ENCODE measurements at regions of chr7 and their contacts with region 1.

Region 1: DNA sequence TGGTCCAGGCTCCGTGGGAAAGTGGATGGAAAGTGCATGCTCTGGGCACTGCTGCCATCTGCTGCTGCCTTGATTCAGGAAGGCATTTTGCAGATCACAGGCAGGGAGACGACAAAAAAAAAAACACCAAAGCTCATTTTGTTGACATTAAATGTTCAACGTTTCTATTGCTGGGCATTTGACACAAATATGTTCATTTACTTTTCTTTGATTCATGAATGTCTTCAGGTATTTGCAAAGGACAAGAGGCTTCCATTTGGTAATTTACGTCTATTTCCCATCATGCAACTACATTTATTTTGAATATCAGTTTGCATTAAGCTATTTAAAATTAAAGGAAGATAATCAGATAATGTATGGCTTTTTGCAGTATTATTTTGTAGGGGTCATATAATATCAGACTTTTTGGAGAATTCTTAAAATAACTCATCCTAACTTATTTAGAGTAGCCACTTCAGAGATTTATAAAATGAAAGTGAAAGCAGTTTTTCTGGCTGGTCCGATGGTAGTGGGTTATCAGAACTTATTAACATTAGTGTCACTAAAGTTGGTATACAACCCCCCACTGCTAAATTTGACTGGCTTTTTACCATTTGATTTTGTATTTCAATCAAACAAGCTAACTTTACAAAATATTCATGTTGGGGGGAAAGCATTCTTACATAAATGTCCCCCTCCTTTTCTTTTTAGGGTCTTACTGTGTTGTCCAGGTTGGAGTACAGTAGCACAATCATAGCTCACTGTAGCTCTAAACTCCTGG is 65.3 kb downstream of the PDIA4 start:
- DNase-seq: peak; percentile 51
- H3K4me3 Mint-ChIP-seq: peak overlapping the region; percentile 86
- H3K27ac Mint-ChIP-seq: peak overlapping the region; percentile 77
- H3K4me1 Mint-ChIP-seq: peaks cover 25% of the 10 kb centered on the region
- H3K27me3 Mint-ChIP-seq: no peaks in the 10 kb centered on the region

Region 2: DNA sequence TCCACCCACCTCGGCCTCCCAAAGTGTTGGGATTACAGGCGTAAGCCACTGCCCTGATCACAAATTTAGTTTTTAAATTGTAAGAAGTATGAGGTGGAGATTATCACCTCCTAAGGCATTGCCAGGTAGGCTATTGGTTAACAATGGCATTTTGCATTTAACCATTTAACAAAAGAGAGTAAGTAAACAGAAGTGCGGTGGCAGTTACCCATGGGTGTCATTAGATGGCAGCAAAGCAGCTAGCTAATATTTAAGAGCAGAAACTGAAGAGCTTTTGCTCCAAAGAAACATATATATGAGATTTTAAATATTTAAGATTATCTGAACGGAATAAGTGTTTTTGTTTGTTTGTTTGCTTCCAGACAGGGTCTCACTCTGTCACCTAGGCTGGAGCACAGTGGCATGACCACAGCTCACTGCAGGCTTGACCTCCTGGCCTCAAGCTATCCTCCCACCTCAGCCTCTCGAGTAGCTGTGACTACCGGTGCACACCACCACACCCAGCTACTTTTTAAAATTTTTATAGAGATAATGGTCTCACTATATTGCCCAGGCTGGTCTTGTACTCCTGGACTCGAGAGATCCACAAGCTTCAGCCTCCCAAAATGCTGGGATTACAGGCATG is 698.0 kb before region 1 on chr7:
- intact Hi-C with region 1: loop called (anchors 5 kb)
- DNase-seq: no peak
- H3K4me3 Mint-ChIP-seq: no peak overlapping the region
- H3K27ac Mint-ChIP-seq: no peak overlapping the region
- H3K4me1 Mint-ChIP-seq: peaks cover 7% of the 10 kb centered on the region
- H3K27me3 Mint-ChIP-seq: peaks cover 8% of the 10 kb centered on the region

Region 3: DNA sequence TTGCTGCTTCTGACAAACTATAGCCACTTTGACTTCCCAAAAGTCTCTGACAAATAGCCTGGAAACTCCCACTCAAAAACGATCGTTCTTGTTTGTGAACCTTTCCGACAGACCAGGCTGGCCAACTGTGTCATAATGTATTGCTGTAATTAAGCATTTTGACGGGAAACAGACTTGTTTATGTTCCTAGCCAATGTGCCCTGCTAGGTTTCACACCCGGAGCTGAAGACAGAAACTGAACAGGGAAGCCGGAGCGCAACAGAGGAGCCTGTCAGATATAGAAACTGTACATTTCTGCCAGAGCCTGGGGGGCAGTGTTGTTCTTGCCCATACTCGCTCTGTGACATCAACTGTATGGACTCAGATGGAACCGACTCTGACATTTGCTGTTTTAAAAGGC is 427.8 kb before region 1 on chr7:
- intact Hi-C with region 1: no loop called
- DNase-seq: no peak
- H3K4me3 Mint-ChIP-seq: no peak overlapping the region
- H3K27ac Mint-ChIP-seq: no peak overlapping the region
- H3K4me1 Mint-ChIP-seq: peaks cover 12% of the 10 kb centered on the region
- H3K27me3 Mint-ChIP-seq: peaks cover 22% of the 10 kb centered on the region

Region 4: GRCh38 chr7:148575640-148576411 is 387.2 kb before region 1 on chr7:
- intact Hi-C with region 1: loop called (anchors 2 kb)
- DNase-seq: peak; percentile 57
- H3K4me3 Mint-ChIP-seq: no peak overlapping the region
- H3K27ac Mint-ChIP-seq: no peak overlapping the region
- H3K4me1 Mint-ChIP-seq: peaks cover 24% of the 10 kb centered on the region
- H3K27me3 Mint-ChIP-seq: peaks cover 19% of the 10 kb centered on the region

Region 5: DNA sequence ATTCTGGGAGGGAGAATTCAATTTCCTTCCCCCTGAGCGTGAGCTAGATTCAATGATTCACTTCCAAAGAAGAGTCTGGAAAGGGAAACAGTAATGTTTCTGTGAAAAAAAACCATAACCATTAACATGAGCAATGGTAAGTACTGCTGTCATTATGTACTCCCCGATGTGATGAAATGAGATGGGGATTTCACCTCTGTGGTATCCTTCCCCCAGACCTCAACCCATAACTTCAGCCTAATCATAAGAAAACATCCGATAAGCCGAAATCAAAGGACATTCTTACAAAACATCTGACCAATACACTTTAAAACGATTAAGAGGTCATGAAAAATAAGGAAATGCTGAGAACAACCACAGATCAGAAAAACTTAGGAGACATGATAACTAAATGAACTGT is 106.1 kb before region 1 on chr7:
- intact Hi-C with region 1: loop called (anchors 2 kb)
- DNase-seq: no peak
- H3K4me3 Mint-ChIP-seq: no peak overlapping the region
- H3K27ac Mint-ChIP-seq: peak overlapping the region; percentile 79
- H3K4me1 Mint-ChIP-seq: peaks cover 47% of the 10 kb centered on the region
- H3K27me3 Mint-ChIP-seq: no peaks in the 10 kb centered on the region

Region 6: GRCh38 chr7:148912758-148913541 is 50.1 kb before region 1 on chr7:
- intact Hi-C with region 1: no loop called
- DNase-seq: peak; percentile 41
- H3K4me3 Mint-ChIP-seq: peak overlapping the region; percentile 71
- H3K27ac Mint-ChIP-seq: peak overlapping the region; percentile 92
- H3K4me1 Mint-ChIP-seq: peaks cover 67% of the 10 kb centered on the region
- H3K27me3 Mint-ChIP-seq: no peaks in the 10 kb centered on the region

Region 7: DNA sequence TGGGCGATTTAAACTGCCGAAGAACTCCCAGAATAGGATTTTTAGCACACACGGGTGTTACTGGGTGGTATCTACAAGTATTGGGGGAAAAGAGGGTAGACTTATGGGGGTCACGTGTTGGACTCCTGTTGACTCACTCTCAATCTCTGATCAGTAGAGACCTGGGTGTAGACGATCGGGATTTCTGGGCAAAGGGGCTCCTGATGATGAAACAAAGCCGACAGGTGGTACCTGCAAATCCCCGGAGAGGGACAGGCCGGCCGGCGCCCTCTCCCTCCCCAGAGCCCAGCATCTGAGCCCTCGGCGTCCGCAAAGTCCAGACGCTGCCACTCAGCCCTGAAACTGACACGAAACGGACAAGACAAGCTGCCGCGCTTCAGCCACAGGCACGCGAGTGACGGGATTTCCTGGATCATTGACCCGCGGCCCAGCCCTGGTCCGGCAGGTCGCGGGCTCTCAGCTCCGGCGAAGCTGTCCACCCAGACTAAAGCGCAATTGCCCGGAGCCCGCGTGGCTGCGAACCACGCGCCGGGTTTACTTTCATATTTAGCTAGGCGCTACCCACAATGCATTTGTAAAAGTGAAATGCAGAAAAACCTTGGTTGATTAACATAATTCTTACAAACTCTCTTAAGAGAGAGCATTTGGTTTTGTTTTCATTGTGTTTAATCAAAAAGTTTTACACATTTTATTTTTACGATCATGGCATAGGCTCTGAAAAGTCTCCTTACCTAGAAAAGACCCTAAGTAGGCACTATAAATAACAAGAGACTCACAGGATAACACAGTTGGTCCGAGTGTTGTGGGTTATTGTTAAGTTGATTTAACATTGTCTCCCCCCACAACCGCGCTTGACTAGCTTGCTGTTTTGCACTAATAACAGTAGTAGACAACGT is 22.1 kb before region 1 on chr7:
- intact Hi-C with region 1: loop called (anchors 2 kb)
- DNase-seq: peak; percentile 66
- H3K4me3 Mint-ChIP-seq: peak overlapping the region; percentile 94
- H3K27ac Mint-ChIP-seq: peak overlapping the region; percentile 99
- H3K4me1 Mint-ChIP-seq: peaks cover 20% of the 10 kb centered on the region
- H3K27me3 Mint-ChIP-seq: no peaks in the 10 kb centered on the region

Region 8: GRCh38 chr7:148994601-148995000 is 31.6 kb after region 1 on chr7:
- intact Hi-C with region 1: no loop called
- DNase-seq: no peak
- H3K4me3 Mint-ChIP-seq: no peak overlapping the region
- H3K27ac Mint-ChIP-seq: no peak overlapping the region
- H3K4me1 Mint-ChIP-seq: no peaks in the 10 kb centered on the region
- H3K27me3 Mint-ChIP-seq: no peaks in the 10 kb centered on the region

Region 9: DNA sequence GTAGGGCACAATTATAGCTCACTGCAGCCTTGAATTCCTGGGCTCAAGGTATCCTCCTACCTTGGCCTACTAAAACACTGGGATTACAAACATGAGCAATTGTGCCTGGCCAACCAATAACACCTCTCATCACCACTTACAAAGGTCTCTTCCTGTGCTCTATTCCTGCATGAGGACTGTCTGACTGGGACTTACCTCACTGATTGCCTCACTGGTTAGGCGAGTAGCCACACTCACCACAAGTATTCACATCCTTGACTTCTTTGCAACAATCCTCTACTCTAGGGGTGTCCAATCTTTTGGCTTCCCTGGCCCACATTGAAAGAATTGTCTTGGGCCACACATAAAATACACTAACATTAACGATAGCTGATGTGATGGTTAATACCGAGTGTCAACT is 87.9 kb after region 1 on chr7:
- intact Hi-C with region 1: no loop called
- DNase-seq: no peak
- H3K4me3 Mint-ChIP-seq: no peak overlapping the region
- H3K27ac Mint-ChIP-seq: no peak overlapping the region
- H3K4me1 Mint-ChIP-seq: no peaks in the 10 kb centered on the region
- H3K27me3 Mint-ChIP-seq: peaks cover 5% of the 10 kb centered on the region

Measured in activated T-helper 2 cell treated with anti-CD3 and anti-CD28 coated beads, Interferon-gamma antibody, Interleukin-2, Interleukin-4, amounts not matched to agents 10 μg/mL and 5 μg/mL and 100 μg/mL, durations not matched to agents 14 hours and 24 hours and 36 hours (primary cell).